Aorta (tissue), 5 donors: ENCODE measurements at regions of chr6 and their contacts with region 1.

Region 1: DNA sequence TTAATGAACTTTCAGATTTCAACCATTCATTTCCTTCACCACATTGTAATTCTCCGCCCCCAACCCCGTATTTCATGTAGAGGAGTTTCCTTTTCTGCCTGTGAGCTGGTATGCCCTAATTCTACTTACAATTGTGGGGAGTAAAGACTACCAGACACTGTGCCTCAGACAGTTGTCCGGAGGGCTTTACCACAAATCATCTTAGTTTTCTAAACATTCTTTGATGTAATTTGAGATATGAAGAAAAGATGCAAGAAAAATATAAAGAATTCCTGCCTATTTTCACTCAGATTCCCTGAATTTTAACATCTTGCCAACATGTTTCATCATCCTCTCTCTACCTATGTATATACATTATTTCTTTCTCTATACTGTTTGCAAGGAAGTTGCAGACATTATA is 28.3 kb upstream of the LOC128125822 start:
- DNase-seq: no peak
- ATAC-seq: no peak
- H3K4me3 ChIP-seq: no peak overlapping the region
- H3K27ac ChIP-seq: no peak overlapping the region
- H3K4me1 ChIP-seq: no peaks in the 10 kb centered on the region
- H3K27me3 ChIP-seq: no peaks in the 10 kb centered on the region

Region 2: DNA sequence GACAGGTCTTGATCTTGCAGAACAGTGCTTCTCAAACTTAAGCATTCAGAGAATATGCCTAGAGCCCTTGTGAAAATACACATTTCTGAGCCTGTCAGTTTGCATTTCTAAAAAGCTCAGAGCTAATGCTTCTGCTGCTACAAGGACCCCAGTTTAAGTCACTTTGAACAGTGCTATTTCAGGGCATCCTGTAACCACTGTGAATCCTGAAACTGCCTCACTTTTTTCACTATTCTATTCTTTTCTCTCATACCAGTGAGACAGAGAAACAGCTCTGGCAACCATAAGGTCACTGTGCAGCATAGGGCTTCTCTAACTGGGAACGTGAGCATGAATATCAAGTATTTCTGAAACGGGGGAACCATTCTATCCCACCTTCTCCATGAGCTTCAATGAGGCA is 275.4 kb before region 1 on chr6:
- intact Hi-C with region 1: no loop called
- DNase-seq: no peak
- ATAC-seq: no peak
- H3K4me3 ChIP-seq: no peak overlapping the region
- H3K27ac ChIP-seq: no peak overlapping the region
- H3K4me1 ChIP-seq: no peaks in the 10 kb centered on the region
- H3K27me3 ChIP-seq: no peaks in the 10 kb centered on the region

Region 3: GRCh38 chr6:63476302-63476701 is 67.7 kb before region 1 on chr6:
- intact Hi-C with region 1: loop called in 1 of 2 experiments (anchors 10 kb)
- DNase-seq: no peak
- ATAC-seq: no peak
- H3K4me3 ChIP-seq: no peak overlapping the region
- H3K27ac ChIP-seq: no peak overlapping the region
- H3K4me1 ChIP-seq: no peaks in the 10 kb centered on the region
- H3K27me3 ChIP-seq: no peaks in the 10 kb centered on the region

Region 4: DNA sequence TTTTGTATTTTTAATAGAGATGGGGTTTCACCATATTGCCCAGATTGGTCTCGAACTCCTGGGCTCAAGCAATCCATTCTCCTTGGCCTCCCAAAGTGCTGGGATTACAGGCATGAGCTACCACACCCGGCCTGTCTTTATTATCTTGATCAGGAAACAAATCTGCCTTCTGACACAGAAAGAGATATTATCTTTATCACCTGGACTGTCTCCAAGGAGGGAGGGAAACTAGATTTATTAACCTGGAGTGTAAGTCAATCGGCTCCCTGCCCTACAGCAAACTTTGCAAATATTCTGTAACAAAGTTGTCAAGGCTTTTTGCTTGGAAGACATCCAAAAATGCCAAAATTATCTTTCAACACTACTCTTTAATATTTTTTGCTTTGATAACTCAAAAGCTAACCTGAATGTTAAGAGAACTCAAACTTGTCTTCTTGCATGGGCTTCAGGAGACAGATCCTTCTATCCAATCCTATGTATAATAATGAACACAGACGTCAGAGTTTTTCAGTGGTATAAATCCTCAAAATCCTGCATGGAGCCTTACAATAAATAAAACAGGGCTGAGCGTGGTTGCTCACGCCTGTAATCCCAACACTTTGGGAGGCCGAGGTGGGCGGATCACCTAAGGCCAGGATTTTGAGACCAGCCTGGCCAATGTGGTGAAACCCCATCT is 56.7 kb before region 1 on chr6:
- intact Hi-C with region 1: no loop called
- DNase-seq: no peak
- ATAC-seq: no peak
- H3K4me3 ChIP-seq: no peak overlapping the region
- H3K27ac ChIP-seq: no peak overlapping the region
- H3K4me1 ChIP-seq: peaks cover 0 to 1% of the 10 kb centered on the region in 2 donors
- H3K27me3 ChIP-seq: no peaks in the 10 kb centered on the region

Region 5: DNA sequence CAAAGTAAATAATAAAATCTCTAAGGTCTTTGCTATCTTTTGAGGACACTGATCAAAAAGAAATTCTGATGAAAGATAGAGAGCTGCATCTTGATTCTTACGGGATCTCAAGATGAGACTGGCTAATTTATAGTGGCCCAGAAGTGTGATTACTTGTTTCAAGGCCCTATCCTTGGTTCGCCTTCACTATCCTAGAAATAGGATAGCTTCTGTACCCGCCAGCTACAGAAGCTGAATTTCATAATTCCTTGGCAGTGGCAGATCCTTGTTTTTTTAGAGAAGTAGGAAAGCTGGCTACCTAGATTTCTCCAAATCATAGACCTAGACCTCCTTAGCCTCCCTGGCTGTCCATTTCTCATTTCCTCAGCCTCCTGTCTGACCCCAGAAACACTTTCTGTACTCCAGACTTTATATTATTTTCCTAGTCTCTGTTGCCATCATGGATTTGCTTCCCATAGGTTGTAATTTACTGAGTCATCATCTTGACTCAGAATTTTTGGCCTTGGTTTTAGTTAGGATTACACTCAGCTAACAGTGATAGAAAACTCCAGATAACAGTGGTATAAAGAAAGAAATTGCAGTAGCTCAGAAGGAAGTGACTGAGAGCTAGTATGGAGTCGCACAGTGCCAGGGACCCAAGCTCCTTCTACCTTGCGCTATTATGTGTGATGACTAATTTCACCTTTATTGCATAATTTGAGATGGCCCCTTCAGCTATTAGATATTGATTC is 119.3 kb after region 1 on chr6:
- intact Hi-C with region 1: no loop called
- DNase-seq: no peak
- ATAC-seq: peak; percentile 66
- H3K4me3 ChIP-seq: no peak overlapping the region
- H3K27ac ChIP-seq: no peak overlapping the region
- H3K4me1 ChIP-seq: peaks cover 0 to 2% of the 10 kb centered on the region in 2 donors
- H3K27me3 ChIP-seq: no peaks in the 10 kb centered on the region